Activated CD4-positive, alpha-beta memory T cell treated with anti-CD3 and anti-CD28 coated beads, Interleukin-2, amount 10 ng/mL, durations not matched to agents 7 days and 5 days (primary cell): ENCODE measurements at regions of chr11 and their contacts with region 1.

Region 1: DNA sequence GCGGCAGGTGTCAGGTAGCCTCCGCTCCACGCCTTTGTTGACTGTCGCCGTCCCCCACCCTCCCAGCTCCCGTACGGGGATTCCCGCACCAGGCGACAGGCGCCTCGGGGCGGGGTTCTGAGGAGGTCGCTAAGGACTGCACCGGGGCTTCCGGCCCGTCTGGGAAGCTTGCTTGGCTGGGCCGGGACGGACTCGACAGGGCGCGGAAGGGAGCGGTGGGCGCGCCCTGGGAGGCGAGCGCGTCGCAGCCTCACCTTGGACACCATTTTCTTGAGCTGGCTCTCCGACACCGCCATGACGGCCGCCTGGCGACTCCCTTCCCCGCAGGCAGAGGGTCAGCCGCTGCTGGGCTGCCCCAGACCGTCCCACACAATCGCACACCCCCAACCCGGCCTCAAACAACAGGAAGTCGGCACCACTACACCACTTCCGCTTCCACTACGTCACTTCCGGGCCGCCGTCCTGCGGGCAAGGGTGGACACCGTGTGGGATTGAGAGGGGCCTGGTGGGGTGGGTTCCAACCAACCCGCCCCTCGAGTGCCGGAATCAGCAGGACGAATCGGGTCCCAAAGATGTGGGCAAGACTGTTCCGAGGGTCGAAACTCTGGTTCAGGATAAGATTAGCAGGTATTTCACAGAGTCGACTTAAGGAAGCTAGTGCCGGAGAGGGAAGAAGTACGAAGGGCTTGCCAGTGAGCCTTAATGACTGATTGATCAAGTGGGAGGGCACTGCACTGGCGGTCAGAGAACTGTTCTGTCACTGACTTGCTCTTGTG is at the start of gene TSG101:
- DNase-seq: peak; percentile 92
- H3K4me3 Mint-ChIP-seq: peak within 1 kb of the TSS; percentile 99
- H3K27ac Mint-ChIP-seq: peak within 1 kb of the TSS; percentile 100
- H3K4me1 Mint-ChIP-seq: peaks cover 50% of the 10 kb centered on the region
- H3K27me3 Mint-ChIP-seq: no peaks in the 10 kb centered on the region
- total RNA-seq, gene TSG101: 40.4 to 44.2 TPM

Region 2: GRCh38 chr11:18243783-18244362 is 282.8 kb before region 1 on chr11:
- CTCF ChIA-PET with region 1: interaction called, 20 read pairs
- POLR2A ChIA-PET with region 1: interaction called, 11 read pairs
- DNase-seq: peak; percentile 76
- H3K4me3 Mint-ChIP-seq: no peak overlapping the region
- H3K27ac Mint-ChIP-seq: no peak overlapping the region
- H3K4me1 Mint-ChIP-seq: peaks cover 35% of the 10 kb centered on the region
- H3K27me3 Mint-ChIP-seq: peaks cover 17% of the 10 kb centered on the region

Region 3: GRCh38 chr11:18383388-18384156 is 143.1 kb before region 1 on chr11:
- CTCF ChIA-PET with region 1: interaction called, 4 read pairs
- POLR2A ChIA-PET with region 1: interaction called, 26 read pairs
- DNase-seq: peak; percentile 79
- H3K4me3 Mint-ChIP-seq: peak overlapping the region; percentile 58
- H3K27ac Mint-ChIP-seq: peak overlapping the region; percentile 99
- H3K4me1 Mint-ChIP-seq: peaks cover 42% of the 10 kb centered on the region
- H3K27me3 Mint-ChIP-seq: no peaks in the 10 kb centered on the region

Region 4: DNA sequence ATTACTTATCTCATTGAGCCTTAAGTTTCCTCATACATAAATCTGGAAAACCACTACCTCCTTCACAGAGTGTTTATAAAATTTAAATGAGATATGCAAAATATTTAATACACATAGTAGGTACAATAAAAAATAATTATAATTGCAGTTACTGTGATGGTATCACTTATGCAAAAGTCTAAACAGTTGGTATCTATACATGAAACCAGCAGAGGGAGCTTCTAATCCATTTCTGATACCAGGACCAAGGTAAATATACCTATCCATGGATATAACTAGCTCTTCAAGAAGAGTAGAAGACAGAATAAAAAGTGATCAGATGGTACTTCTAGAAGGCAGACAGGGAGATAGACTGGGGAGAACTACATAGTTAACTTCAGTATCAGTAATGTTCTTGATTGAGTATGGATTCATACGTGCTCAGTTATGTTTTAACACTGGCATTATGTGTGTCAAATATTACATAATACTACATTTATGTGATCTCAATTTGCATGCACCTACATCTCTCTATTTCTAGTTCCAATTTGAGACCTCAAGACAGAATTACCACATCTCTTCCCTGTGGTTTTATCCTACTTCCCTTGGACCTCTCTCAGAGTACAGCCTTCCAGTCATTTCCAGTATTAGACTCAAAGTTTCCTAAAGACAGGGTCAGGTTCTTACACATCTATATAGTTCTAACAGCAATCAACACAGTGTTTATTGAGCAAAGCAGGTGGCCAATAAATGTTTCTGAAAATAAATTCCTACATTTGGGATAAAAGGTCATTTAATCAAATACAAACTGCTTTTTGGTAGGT is 13.7 kb after region 1 on chr11:
- CTCF ChIA-PET with region 1: interaction called, 15 read pairs
- POLR2A ChIA-PET with region 1: interaction called, 16 read pairs
- DNase-seq: no peak
- H3K4me3 Mint-ChIP-seq: no peak overlapping the region
- H3K27ac Mint-ChIP-seq: no peak overlapping the region
- H3K4me1 Mint-ChIP-seq: peaks cover 1% of the 10 kb centered on the region
- H3K27me3 Mint-ChIP-seq: no peaks in the 10 kb centered on the region

Region 5: DNA sequence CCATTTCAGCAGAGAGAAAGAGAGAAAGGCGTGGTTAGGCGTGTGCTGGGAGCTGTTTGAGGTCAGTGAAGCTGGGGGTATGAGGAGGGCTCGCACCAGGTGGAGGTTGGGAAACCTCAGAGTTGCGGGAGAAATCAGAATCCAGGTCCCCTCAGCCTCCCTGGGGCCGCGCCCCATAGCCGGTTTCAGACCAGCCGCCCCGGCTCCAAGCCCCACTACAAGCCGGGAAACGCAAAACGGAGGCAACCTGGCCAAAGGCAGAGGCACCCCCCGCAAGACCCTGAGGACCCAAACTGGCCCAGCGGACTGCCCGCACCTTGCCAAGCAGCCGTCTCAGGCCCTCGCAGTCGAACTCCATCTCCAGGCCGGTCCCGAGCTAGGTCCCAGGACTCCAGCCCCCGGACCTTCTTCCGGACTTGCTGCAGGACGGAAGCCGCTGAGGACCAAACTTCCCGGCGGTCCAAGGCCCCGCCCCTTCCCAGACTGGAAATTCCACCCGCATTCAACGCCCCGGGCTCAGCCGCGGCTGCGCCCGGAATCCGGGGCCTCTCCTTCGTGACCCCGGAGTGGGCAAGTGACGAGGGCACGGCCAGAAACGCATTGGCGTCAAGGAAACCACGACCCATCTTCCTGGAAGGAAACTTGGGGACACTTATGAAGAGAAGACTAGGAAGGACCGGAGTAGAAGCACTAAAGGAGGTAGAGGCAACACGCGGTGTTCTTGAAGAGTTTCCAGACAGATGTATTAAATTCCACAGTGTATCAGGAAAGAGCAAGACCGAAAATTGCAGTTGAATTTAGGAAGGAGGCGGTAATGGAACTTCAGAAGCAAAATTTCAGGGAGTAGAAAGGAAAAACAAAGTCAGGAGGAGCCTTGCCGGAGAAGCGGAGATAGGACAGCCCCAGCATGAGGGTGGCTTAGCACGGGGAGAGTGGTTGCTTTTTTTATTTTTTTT is 61.9 kb after region 1 on chr11 and contains the start of gene UEVLD:
- CTCF ChIA-PET with region 1: no interaction called
- POLR2A ChIA-PET with region 1: interaction called, 61 read pairs
- DNase-seq: peak; percentile 68
- H3K4me3 Mint-ChIP-seq: no peak within 1 kb of the TSS
- H3K27ac Mint-ChIP-seq: no peak within 1 kb of the TSS
- H3K4me1 Mint-ChIP-seq: peaks cover 2% of the 10 kb centered on the region
- H3K27me3 Mint-ChIP-seq: no peaks in the 10 kb centered on the region
- total RNA-seq, gene UEVLD: 23.3 to 26.1 TPM

Region 6: DNA sequence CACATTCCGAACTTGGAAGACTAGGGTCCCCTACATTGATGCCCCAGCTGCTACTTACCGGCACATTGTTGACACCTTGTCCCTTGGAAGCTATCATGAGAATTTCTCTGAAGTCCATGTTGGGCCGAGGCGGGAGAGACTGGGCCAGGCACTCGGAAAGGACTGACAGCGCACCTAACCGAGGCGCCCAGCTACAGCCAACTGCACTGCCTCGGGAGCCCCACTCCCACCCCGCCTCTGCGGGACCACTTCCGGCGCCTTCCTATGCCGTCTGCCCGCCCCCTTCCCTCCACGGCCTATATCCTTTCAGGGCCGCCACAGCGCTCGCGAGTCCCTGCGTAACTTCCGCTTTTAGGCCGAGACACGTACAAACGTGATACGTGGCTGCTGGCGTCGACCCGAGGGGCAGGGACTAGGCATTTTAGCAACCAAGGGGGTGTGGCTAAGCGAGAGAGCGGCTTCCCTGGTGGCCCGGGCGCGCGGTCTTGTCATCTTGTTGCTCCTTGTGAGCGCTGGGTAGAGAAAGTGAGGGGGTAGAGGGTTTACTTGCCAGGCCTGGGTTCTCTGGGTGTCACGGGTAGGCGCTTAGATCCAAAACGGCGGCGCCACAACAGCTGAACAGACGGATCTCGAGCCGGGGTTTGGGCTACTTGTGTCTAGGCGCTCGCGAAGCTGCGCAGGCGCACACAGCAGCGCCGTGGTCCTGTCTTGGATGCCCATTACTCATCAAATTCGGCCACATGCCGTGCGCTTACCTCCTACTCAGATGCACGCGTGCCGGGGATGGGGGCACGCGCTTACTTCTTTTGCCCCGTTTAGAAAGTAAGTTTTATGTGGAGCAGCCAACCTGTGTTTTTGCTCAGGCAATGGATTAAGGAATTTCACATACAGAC is 107.7 kb after region 1 on chr11 and contains the start of gene SPTY2D1:
- CTCF ChIA-PET with region 1: interaction called, 15 read pairs
- POLR2A ChIA-PET with region 1: interaction called, 72 read pairs
- DNase-seq: peak; percentile 99
- H3K4me3 Mint-ChIP-seq: peak within 1 kb of the TSS; percentile 86
- H3K27ac Mint-ChIP-seq: peak within 1 kb of the TSS; percentile 92
- H3K4me1 Mint-ChIP-seq: peaks cover 23% of the 10 kb centered on the region
- H3K27me3 Mint-ChIP-seq: no peaks in the 10 kb centered on the region
- total RNA-seq, gene SPTY2D1: 30.8 to 32.8 TPM